ENCODE measurements at regions of chr3 and their contacts with region 1.

Region 1: DNA sequence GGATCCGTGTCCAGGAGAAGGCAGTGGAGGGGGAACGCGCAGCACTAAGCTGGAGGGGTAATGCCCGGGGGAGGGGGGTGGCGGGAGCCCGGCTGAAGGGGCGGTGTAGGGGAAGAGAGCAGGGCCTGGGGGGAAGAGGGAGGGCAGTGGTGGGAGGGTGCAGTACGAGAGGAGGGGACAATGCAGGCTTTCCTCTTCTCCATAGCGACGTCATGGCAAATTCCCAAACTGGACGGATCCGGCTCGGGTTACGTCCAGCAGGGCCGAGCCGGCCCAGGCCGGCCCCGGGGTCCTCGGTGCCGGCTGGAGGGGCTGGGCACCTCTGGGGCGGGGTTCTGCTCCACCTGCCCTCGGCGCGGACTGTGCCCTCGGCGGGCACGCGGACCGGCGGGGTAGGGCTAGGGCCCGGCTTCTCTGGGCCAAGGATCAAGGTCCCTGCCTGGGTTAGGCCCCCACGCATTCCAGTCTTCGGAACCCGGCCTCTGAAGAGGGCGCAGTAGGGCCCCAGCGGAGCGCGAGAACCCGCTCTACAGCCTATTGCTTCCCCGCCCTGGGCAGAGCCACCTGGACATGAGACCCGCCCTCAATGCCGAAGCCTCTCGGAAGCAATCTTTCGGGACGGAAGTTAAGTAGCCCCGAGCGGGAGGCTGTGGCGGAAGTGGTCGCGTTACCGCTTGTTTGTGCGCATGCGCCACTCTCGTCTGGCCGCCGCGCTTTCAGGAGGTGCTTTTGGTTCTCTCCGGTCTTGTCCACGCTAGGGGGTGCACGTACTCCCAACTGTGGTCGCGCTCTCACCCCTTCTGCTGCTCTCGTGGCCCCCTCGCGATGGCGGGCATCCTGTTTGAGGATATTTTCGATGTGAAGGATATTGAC is 1.4 kb downstream of the POLR2H start:
- DNase-seq: peak; percentile 97
- ATAC-seq: peak; percentile 91
- H3K4me3 Mint-ChIP-seq: peak overlapping the region; percentile 98
- H3K27ac Mint-ChIP-seq: peak overlapping the region; percentile 98
- H3K4me1 Mint-ChIP-seq: peaks cover 30% of the 10 kb centered on the region
- H3K27me3 Mint-ChIP-seq: no peaks in the 10 kb centered on the region

Region 2: GRCh38 chr3:184314363-184314699 is 48.6 kb before region 1 on chr3 and contains the start of gene EIF4G1:
- CTCF ChIA-PET with region 1: interaction called, 3 read pairs
- POLR2A ChIA-PET with region 1: no interaction called
- intact Hi-C with region 1: loop called (anchors 1 to 2 kb)
- DNase-seq: peak; percentile 96
- ATAC-seq: peak; percentile 89
- H3K4me3 Mint-ChIP-seq: peak within 1 kb of the TSS; percentile 84
- H3K27ac Mint-ChIP-seq: peak within 1 kb of the TSS; percentile 90
- H3K4me1 Mint-ChIP-seq: peaks cover 29% of the 10 kb centered on the region
- H3K27me3 Mint-ChIP-seq: no peaks in the 10 kb centered on the region
- total RNA-seq, gene EIF4G1: 479 to 556 TPM

Region 3: DNA sequence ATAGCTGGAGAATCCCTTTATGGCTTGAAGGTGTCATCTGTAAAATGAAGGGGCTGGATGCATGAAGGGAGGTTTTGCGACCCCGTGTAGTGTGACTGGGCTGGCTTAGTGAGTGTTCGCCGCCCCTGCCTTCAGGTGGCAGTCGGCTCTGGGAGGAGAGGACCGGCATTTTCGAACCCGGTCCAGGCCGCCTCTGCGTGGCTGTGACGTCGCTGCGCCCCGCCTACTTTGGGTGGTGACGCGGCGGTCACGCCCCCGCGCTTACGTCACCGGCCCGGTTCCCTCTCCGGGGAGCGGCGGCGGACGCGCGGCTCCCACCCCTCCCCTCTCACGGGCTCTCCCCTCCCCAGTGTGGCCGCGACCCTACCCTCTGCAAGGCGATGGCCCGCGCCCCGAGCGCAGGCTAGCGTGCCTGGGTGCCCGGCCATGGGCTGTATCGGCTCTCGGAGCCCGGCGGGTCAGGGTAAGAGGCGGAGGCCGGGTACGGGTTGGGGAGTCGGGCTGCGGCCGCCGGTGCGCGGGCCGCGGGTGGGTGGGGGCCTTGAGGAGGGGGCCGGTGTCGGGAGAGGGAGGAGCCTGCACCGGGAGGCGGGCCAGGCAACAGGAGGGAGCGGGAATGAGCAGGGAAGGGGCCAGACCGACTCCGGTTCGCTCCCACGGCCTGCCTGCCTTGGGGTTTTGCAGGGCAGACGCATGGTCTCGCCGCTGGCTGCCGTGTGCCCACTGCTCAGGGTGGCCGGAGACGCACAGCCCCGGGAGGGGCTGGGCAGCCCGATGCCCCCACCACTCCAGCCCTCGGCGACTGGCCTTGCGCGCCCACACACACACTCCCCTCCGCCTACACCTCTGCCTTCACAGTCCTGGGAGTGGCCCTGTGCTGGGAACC is 27.0 kb before region 1 on chr3:
- CTCF ChIA-PET with region 1: interaction called, 3 read pairs
- POLR2A ChIA-PET with region 1: interaction called, 4 read pairs
- intact Hi-C with region 1: loop called (anchors 1 kb)
- DNase-seq: peak; percentile 92
- ATAC-seq: peak; percentile 50
- H3K4me3 Mint-ChIP-seq: peak overlapping the region; percentile 75
- H3K27ac Mint-ChIP-seq: peak overlapping the region; percentile 85
- H3K4me1 Mint-ChIP-seq: peaks cover 62% of the 10 kb centered on the region
- H3K27me3 Mint-ChIP-seq: no peaks in the 10 kb centered on the region

Region 4: GRCh38 chr3:185282696-185283394 is 919.9 kb after region 1 on chr3:
- CTCF ChIA-PET with region 1: no interaction called
- POLR2A ChIA-PET with region 1: no interaction called
- intact Hi-C with region 1: loop called in 1 of 2 experiments (anchors 5 kb)
- DNase-seq: peak; percentile 98
- ATAC-seq: peak; percentile 100
- H3K4me3 Mint-ChIP-seq: peak overlapping the region; percentile 97
- H3K27ac Mint-ChIP-seq: peak overlapping the region; percentile 92
- H3K4me1 Mint-ChIP-seq: peaks cover 19% of the 10 kb centered on the region
- H3K27me3 Mint-ChIP-seq: peaks cover 7% of the 10 kb centered on the region

Measured in activated CD4-positive, alpha-beta T cell treated with anti-CD3 and anti-CD28 coated beads for 36 hours (primary cell).